PC-3 (cell line): ENCODE measurements at regions of chr3 and their contacts with region 1.

Region 1: DNA sequence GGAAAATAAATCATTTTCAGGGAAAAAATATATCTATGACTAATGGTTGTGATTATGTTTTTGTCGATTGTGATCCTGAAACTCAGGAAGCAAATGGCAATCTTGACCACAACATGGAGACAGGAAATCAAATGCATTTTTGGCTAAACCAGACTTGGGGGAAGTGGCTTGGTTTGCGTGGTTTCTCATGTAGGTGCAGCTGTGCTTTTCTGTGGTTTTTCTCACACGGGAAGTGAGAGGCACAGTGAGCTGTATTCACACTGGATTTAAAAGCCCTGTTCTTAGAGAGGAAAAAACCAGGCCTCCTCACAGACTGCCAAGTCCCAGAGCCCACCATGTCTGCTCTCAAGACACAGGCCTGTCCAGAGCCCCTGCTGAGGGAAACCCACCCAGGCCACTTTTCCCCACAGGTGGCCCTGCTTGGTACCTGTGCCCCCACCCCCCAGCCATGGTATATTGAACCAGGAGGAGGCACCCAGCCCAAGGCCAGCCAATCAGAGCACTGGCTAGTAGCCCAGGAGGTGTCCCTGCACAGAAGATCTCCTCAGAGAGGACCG is 46.1 kb downstream of the BTD start:
- DNase-seq: peak; percentile 90
- ATAC-seq: peak; percentile 39
- H3K4me3 ChIP-seq: peak overlapping the region; percentile 51
- H3K27ac ChIP-seq: peak overlapping the region; percentile 98
- H3K4me1 ChIP-seq: peaks cover 42% of the 10 kb centered on the region
- H3K27me3 ChIP-seq: no peaks in the 10 kb centered on the region
- CTCF ChIP-seq: no peak

Region 2: GRCh38 chr3:15636003-15636709 is 11.5 kb before region 1 on chr3:
- CTCF ChIA-PET with region 1: interaction called, 4 read pairs
- POLR2A ChIA-PET with region 1: interaction called, 8 read pairs
- intact Hi-C with region 1: loop called (anchors 1 kb)
- DNase-seq: peak; percentile 93
- ATAC-seq: peak; percentile 67
- H3K4me3 ChIP-seq: peak overlapping the region; percentile 53
- H3K27ac ChIP-seq: peak overlapping the region; percentile 97
- H3K4me1 ChIP-seq: peaks cover 72% of the 10 kb centered on the region
- H3K27me3 ChIP-seq: no peaks in the 10 kb centered on the region
- CTCF ChIP-seq: no peak

Region 3: GRCh38 chr3:15660055-15660935 is 12.6 kb after region 1 on chr3:
- CTCF ChIA-PET with region 1: no interaction called
- POLR2A ChIA-PET with region 1: no interaction called
- intact Hi-C with region 1: loop called (anchors 1 kb)
- DNase-seq: peak; percentile 75
- ATAC-seq: peak; percentile 85
- H3K4me3 ChIP-seq: no peak overlapping the region
- H3K27ac ChIP-seq: peak overlapping the region; percentile 80
- H3K4me1 ChIP-seq: peaks cover 18% of the 10 kb centered on the region
- H3K27me3 ChIP-seq: no peaks in the 10 kb centered on the region
- CTCF ChIP-seq: no peak